A673 (cell line): ENCODE measurements at regions of chr10 and their contacts with region 1.

Region 1: DNA sequence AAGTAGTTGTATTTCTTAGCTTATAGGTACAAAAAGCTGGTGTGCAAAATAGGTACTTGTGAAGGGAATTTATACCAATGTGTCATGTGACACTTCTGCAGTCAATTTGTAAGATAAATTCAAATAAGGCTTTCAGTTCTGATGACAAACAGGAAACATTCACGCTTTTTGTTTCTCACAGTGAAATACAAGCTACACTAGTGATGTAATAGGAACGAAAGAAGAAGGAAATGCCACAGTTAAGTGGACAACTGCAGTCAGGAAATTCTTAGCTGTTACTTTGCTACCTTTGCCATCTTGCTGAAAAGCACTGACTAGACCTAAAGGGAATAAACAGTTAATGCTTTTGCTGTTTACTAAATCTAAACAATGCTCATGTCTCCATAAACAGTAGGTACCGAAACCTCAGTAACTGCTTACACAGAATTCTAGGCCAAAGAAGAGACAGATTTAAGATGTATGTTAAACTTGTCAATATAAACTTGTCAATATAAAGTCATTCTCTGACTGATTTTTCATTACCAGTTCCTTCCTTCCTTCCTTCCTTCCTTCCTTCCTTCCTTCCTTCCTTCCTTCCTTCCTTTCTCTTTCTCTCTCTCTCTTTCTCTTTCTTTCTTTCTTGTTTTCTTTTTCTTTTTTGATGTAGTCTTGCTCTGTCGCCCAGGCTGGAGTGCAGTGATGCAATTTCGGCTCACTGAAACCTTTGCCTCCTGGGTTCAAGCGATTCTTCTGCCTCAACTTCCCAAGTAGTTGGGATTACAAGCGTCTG is 10.1 kb downstream of the OTUD1 start:
- DNase-seq: peak; percentile 90
- H3K4me3 ChIP-seq: no peak overlapping the region
- H3K27ac ChIP-seq: peak overlapping the region; percentile 95
- H3K4me1 ChIP-seq: peaks cover 32% of the 10 kb centered on the region
- H3K27me3 ChIP-seq: no peaks in the 10 kb centered on the region
- CTCF ChIP-seq: no peak

Region 2: GRCh38 chr10:23656735-23657134 is 207.7 kb after region 1 on chr10:
- CTCF ChIA-PET with region 1: no interaction called
- POLR2A ChIA-PET with region 1: no interaction called
- intact Hi-C with region 1: loop called (anchors 5 kb)
- DNase-seq: peak; percentile 69
- H3K4me3 ChIP-seq: no peak overlapping the region
- H3K27ac ChIP-seq: peak overlapping the region; percentile 82
- H3K4me1 ChIP-seq: peaks cover 35% of the 10 kb centered on the region
- H3K27me3 ChIP-seq: no peaks in the 10 kb centered on the region
- CTCF ChIP-seq: peak; percentile 71